ENCODE measurements at regions of chr18 and their contacts with region 1.

Region 1: DNA sequence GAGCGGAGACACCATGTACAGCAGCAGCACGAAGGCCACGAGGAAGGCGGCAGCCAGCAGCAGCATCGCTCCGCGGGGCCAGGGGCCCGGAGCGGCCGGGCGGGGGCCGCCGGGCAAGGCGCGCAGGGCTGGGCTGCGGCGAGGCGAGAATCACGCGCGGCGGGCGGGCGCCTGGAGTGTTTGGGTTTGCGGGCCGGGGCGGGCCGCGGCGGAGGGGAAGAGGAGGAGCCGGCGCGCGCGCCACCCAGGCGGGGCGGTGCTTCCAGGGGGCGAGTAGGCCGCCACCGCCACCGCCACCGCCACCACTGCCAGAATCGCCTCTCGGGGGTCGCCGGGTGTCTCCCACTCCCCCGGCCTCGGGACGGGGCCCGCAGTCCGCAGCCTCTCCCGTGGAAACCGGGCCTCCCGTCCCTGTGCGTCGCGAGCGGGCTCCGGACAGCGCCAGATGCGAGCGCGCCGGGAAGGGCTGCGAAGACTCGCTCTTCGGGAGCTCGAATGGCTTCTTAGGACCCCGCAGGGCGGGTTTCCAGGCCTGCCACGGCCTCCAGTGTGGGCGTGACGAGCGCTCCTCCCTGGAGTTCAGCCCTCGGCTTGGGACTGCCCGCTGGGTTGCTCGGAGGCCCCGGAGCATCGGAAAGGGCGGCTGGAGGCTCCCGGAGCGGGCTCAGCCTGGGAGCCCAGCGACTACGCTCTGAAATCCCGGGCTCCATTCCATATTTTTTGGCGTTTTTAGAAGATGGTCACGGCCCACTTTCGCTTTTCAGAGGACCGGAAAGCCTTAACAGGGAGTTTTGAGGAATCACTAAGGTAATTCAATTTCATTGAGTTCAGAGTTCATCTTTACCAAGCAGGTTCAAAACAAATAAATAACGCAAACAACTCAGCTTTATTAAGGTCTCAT is at the start of gene KDSR:
- DNase-seq: peak; percentile 82
- H3K4me3 Mint-ChIP-seq: peak within 1 kb of the TSS; percentile 93
- H3K27ac Mint-ChIP-seq: peak within 1 kb of the TSS; percentile 83
- H3K4me1 Mint-ChIP-seq: peaks cover 44% of the 10 kb centered on the region
- H3K27me3 Mint-ChIP-seq: no peaks in the 10 kb centered on the region
- total RNA-seq, gene KDSR: 72.2 and 83.5 TPM in 2 replicates

Region 2: GRCh38 chr18:63329431-63330145 is 37.7 kb before region 1 on chr18:
- intact Hi-C with region 1: no loop called
- DNase-seq: no peak
- H3K4me3 Mint-ChIP-seq: no peak overlapping the region
- H3K27ac Mint-ChIP-seq: no peak overlapping the region
- H3K4me1 Mint-ChIP-seq: no peaks in the 10 kb centered on the region
- H3K27me3 Mint-ChIP-seq: no peaks in the 10 kb centered on the region

Region 3: DNA sequence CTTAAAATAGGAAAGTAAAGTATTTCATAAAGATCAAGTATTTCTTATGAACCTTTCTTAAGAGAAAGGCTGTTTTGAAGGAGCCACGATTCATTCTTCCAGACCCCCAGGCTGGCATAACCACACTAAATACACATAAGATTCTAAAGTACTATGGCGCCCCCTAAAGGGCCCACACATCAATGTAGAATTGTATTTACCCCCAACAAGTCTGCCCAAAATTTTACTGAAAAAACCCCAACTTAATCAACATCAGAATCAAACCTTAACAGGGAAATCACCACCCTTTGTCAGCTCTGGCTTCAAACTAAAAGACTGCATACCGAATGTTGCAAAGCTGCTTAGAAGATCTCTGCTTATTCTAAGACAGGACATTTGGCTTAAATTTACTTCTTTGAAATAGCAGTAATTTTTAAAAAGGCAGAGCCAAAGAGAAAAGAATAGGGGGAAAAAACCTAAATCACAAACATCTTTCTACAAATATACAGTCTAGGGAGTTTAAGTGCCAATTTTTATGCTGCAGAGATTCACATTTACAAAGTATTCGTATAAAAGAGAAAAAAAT is 27.3 kb before region 1 on chr18:
- intact Hi-C with region 1: no loop called
- DNase-seq: peak; percentile 19
- H3K4me3 Mint-ChIP-seq: no peak overlapping the region
- H3K27ac Mint-ChIP-seq: no peak overlapping the region
- H3K4me1 Mint-ChIP-seq: peaks cover 19% of the 10 kb centered on the region
- H3K27me3 Mint-ChIP-seq: no peaks in the 10 kb centered on the region

Region 4: GRCh38 chr18:63378919-63379638 is 11.8 kb after region 1 on chr18:
- intact Hi-C with region 1: loop called (anchors 1 kb)
- DNase-seq: no peak
- H3K4me3 Mint-ChIP-seq: peak overlapping the region; percentile 17
- H3K27ac Mint-ChIP-seq: peak overlapping the region; percentile 58
- H3K4me1 Mint-ChIP-seq: peaks cover 23% of the 10 kb centered on the region
- H3K27me3 Mint-ChIP-seq: no peaks in the 10 kb centered on the region

Region 5: GRCh38 chr18:63410792-63411191 is 43.5 kb after region 1 on chr18:
- intact Hi-C with region 1: loop called (anchors 2 kb)
- DNase-seq: no peak
- H3K4me3 Mint-ChIP-seq: no peak overlapping the region
- H3K27ac Mint-ChIP-seq: peak overlapping the region; percentile 24
- H3K4me1 Mint-ChIP-seq: peaks cover 44% of the 10 kb centered on the region
- H3K27me3 Mint-ChIP-seq: no peaks in the 10 kb centered on the region